ENCODE measurements at regions of chr1 and their contacts with region 1.

Region 1: GRCh38 chr1:33616773-33617172 is 144.3 kb downstream of the ZSCAN20 start:
- H3K4me3 Mint-ChIP-seq: no peak overlapping the region
- H3K27ac Mint-ChIP-seq: no peak overlapping the region
- H3K4me1 Mint-ChIP-seq: no peaks in the 10 kb centered on the region
- H3K27me3 Mint-ChIP-seq: peaks cover 36% of the 10 kb centered on the region

Region 2: GRCh38 chr1:33094971-33095604 is 521.7 kb before region 1 on chr1:
- intact Hi-C with region 1: loop called (anchors 2 kb)
- H3K4me3 Mint-ChIP-seq: no peak overlapping the region
- H3K27ac Mint-ChIP-seq: no peak overlapping the region
- H3K4me1 Mint-ChIP-seq: peaks cover 32% of the 10 kb centered on the region
- H3K27me3 Mint-ChIP-seq: peaks cover 7% of the 10 kb centered on the region

Region 3: DNA sequence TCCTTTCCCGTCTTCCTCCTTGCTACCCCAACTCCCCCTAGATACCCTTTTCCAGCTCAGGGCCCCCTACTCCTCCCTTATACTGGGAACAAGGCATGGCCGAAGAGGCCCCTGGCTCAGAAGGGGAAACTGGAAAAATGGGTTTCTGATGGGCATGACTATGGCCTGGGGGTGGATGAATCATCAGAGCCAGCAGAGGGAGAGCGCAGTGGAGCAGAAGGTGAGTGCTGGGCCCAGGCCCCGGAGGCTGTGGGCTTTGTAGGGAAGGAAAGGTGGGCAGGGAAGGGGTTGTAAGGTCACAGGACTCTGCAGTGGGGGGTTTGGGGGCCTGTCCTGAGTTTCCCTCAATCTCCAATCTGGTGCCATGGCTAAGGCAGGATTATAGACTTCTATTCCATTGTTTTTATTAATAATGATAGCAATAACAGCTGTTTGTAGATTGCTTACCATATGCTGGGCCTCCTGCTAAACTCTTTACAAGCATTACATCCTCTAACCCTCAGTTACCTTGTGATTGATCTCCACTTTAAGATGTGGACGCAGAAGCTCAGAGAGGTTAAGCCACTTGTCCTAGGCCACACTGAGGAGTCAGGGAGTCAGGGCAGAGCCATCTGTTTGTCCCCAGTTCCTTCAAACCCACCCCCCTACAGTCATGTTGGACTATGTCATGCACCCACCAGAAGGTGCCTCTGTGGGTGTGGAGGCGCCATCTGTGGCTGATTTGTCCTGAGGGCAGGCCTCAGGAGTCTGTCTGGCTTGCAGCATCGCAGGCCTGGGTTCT is 396.7 kb before region 1 on chr1:
- intact Hi-C with region 1: loop called (anchors 1 kb)
- H3K4me3 Mint-ChIP-seq: no peak overlapping the region
- H3K27ac Mint-ChIP-seq: no peak overlapping the region
- H3K4me1 Mint-ChIP-seq: peaks cover 17% of the 10 kb centered on the region
- H3K27me3 Mint-ChIP-seq: peaks cover 12% of the 10 kb centered on the region

Region 4: DNA sequence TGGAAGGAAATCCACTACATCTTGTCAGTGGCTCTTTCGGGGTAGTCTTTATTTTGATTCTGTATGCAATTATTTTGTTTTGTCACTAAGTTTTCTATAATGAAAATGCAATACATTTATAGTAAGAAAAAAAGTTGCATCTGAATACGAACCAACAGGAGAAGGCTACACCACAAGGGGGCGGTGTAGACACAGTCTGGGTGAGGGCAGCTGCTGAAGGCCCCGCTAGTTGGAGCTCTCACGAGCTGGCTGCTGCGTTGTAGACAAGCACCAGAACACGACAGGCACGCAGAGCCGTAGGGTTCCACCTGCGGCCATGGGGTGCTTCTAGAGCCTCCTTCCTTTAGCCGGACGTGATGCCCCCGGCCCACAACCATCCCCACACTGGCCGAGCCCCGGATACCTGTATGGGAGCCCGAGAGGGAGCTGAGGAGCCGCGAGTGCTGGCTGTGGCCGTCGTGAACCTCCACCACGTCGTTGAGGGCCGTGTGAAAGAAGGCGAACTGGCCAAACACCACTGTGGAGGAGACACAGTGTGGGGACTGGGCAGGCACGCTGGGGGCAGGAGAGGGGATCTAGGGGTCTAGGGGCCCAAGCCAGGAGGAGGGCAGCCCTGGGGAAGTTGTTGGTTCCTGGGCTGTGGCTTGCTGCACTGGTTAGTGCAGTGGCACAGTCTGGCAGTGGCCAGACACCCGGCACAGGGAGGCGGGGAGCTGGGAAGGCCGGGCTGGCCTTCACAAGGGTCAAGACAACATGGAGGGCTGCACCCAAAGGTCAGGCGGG is 16.4 kb after region 1 on chr1:
- intact Hi-C with region 1: no loop called
- H3K4me3 Mint-ChIP-seq: no peak overlapping the region
- H3K27ac Mint-ChIP-seq: no peak overlapping the region
- H3K4me1 Mint-ChIP-seq: no peaks in the 10 kb centered on the region
- H3K27me3 Mint-ChIP-seq: peaks cover 28% of the 10 kb centered on the region